Activated T-helper 2 cell treated with anti-CD3 and anti-CD28 coated beads, Interferon-gamma antibody, Interleukin-2, Interleukin-4, amounts not matched to agents 10 μg/mL and 5 μg/mL and 100 μg/mL, durations not matched to agents 14 hours and 24 hours and 36 hours (primary cell): ENCODE measurements at regions of chr17 and their contacts with region 1.

Region 1: DNA sequence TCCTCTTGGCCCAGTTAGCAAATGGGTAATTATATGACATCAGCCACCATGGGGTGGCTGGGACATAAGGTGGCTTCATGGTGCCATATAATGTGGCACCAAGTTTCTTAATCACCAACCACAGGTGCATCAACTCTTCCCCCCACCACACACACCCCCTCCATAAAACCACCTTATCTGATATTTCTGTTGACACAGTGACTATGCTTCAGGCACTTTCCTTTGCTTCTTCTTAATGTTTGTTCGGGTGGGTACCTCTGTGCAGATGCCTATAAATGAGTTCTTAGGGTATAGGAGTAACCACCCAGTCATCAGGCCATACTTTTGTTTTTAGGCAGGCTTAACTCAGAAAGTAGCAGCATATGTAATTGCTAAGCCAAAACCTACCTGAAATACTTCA is 29.5 kb downstream of the RNF43 start:
- DNase-seq: no peak
- H3K4me3 Mint-ChIP-seq: no peak overlapping the region
- H3K27ac Mint-ChIP-seq: peak overlapping the region; percentile 61
- H3K4me1 Mint-ChIP-seq: peaks cover 69% of the 10 kb centered on the region
- H3K27me3 Mint-ChIP-seq: no peaks in the 10 kb centered on the region

Region 2: GRCh38 chr17:58200017-58200633 is 187.7 kb before region 1 on chr17:
- intact Hi-C with region 1: no loop called
- DNase-seq: peak; percentile 35
- H3K4me3 Mint-ChIP-seq: no peak overlapping the region
- H3K27ac Mint-ChIP-seq: no peak overlapping the region
- H3K4me1 Mint-ChIP-seq: no peaks in the 10 kb centered on the region
- H3K27me3 Mint-ChIP-seq: peaks cover 3% of the 10 kb centered on the region

Region 3: GRCh38 chr17:58402047-58402446 is 14.2 kb after region 1 on chr17:
- intact Hi-C with region 1: loop called (anchors 1 kb)
- DNase-seq: no peak
- H3K4me3 Mint-ChIP-seq: peak overlapping the region; percentile 45
- H3K27ac Mint-ChIP-seq: peak overlapping the region; percentile 83
- H3K4me1 Mint-ChIP-seq: peaks cover 50% of the 10 kb centered on the region
- H3K27me3 Mint-ChIP-seq: no peaks in the 10 kb centered on the region